ENCODE measurements at regions of chr11 and their contacts with region 1.

Region 1: DNA sequence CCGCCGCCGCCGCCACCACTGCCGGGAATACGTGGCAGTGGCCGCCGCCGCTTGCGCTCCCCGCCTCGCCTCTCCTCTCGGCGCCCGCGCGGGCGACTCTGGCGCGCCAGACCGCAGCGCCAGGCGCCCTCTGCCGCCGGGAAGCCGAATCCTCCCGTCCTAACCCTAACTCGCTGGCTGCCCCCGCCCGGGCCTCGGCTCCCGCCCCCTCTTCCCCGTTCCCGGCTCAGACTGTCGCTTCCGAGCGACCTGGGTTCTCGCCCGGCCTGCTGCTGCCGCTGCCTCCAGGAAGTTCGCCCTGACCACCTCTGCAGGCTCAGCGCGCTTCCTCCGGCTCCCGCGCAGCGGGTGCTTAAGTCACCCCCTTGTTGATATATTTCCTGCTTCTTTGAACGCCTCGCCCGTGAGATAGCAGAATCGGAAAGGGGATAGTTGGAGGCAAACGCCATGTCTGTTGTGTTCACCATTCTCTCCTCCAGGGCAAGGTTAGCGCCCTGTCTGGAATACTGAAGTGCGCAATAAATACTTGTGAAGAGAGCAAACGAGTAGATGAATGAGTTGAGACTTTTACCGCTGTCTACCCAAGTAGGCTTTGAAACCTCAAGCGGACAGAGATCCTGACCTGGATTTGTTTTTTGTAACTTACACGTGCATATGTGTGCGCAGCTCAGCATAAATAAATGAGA is at the start of gene SMCO4:
- DNase-seq: peak; percentile 17 to 82 (median 40)
- ATAC-seq: peak; percentile 83
- H3K4me3 ChIP-seq: peak within 1 kb of the TSS; percentile 48
- H3K4me3 Mint-ChIP-seq: peak within 1 kb of the TSS; percentile 88 to 95 (median 92)
- H3K27ac ChIP-seq: peak within 1 kb of the TSS; percentile 33
- H3K27ac Mint-ChIP-seq: peak within 1 kb of the TSS in 7 of 9 donors; percentile 9 to 87 (median 52)
- H3K4me1 ChIP-seq: no peaks in the 10 kb centered on the region
- H3K4me1 Mint-ChIP-seq: peaks cover 6 to 39% (median 21%) of the 10 kb centered on the region in 7 donors
- H3K27me3 ChIP-seq: no peaks in the 10 kb centered on the region
- H3K27me3 Mint-ChIP-seq: peaks cover 0 to 16% (median 4%) of the 10 kb centered on the region in 5 donors
- total RNA-seq, gene SMCO4: 2.9 to 34.7 (median 5.9) TPM

Region 2: DNA sequence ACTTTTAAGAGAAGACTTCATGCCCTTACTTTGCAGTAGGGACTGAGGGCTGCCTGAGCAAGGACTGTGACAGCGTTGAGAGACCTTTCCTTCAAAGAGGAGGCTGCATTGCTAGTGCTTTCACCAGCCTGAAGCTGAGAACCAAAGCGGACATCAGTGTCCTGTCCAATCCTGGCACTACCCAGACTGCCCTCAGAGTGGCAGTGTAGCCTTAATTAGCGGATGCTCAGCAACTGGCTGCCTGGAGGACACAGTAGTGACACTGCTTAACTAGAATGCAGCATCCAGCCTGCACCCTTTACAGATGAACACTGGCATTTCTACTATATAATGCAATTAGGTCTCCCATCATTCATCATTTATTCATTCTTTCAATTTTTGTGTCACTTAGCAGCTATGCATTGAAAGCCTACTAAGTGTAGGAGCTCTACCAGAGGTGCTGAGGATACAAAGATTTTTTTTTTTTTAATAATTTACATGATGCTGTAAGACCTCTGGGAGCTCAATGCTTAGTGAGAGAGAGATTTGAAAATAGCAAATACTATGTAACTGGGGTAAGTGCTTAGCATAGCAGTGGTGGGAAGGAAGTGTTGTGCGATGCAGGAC is 308.7 kb before region 1 on chr11:
- CTCF ChIA-PET with region 1: interaction called, 3 read pairs
- POLR2A ChIA-PET with region 1: no interaction called
- intact Hi-C with region 1: loop called (anchors 1 kb)
- DNase-seq: peak; percentile 16 to 62 (median 50)
- ATAC-seq: peak; percentile 97
- H3K4me3 ChIP-seq: no peak overlapping the region
- H3K4me3 Mint-ChIP-seq: no peak overlapping the region
- H3K27ac ChIP-seq: no peak overlapping the region
- H3K27ac Mint-ChIP-seq: no peak overlapping the region
- H3K4me1 ChIP-seq: no peaks in the 10 kb centered on the region
- H3K4me1 Mint-ChIP-seq: no peaks in the 10 kb centered on the region
- H3K27me3 ChIP-seq: no peaks in the 10 kb centered on the region
- H3K27me3 Mint-ChIP-seq: peaks cover 27 to 46% (median 40%) of the 10 kb centered on the region in 5 donors

Region 3: GRCh38 chr11:93512073-93512475 is 31.4 kb before region 1 on chr11:
- CTCF ChIA-PET with region 1: no interaction called
- POLR2A ChIA-PET with region 1: no interaction called
- intact Hi-C with region 1: loop called in 1 of 2 experiments (anchors 2 kb)
- DNase-seq: no peak
- ATAC-seq: no peak
- H3K4me3 ChIP-seq: no peak overlapping the region
- H3K4me3 Mint-ChIP-seq: peak overlapping the region in 1 of 10 donors; percentile 55
- H3K27ac ChIP-seq: no peak overlapping the region
- H3K27ac Mint-ChIP-seq: peak overlapping the region in 1 of 9 donors; percentile 83
- H3K4me1 ChIP-seq: no peaks in the 10 kb centered on the region
- H3K4me1 Mint-ChIP-seq: peaks cover 0 to 31% (median 0%) of the 10 kb centered on the region in 7 donors
- H3K27me3 ChIP-seq: no peaks in the 10 kb centered on the region
- H3K27me3 Mint-ChIP-seq: no peaks in the 10 kb centered on the region

Region 4: GRCh38 chr11:93614173-93614722 is 70.8 kb after region 1 on chr11:
- CTCF ChIA-PET with region 1: no interaction called
- POLR2A ChIA-PET with region 1: no interaction called
- intact Hi-C with region 1: loop called in 1 of 2 experiments (anchors 2 kb)
- DNase-seq: peak in 7 of 9 donors; percentile 3 to 56 (median 30)
- ATAC-seq: peak; percentile 55
- H3K4me3 ChIP-seq: no peak overlapping the region
- H3K4me3 Mint-ChIP-seq: no peak overlapping the region
- H3K27ac ChIP-seq: no peak overlapping the region
- H3K27ac Mint-ChIP-seq: peak overlapping the region in 1 of 9 donors; percentile 48
- H3K4me1 ChIP-seq: no peaks in the 10 kb centered on the region
- H3K4me1 Mint-ChIP-seq: peaks cover 0 to 2% (median 0%) of the 10 kb centered on the region in 7 donors
- H3K27me3 ChIP-seq: no peaks in the 10 kb centered on the region
- H3K27me3 Mint-ChIP-seq: peaks cover 0 to 8% (median 6%) of the 10 kb centered on the region in 5 donors

Region 5: GRCh38 chr11:93662177-93662575 is 118.7 kb after region 1 on chr11:
- CTCF ChIA-PET with region 1: no interaction called
- POLR2A ChIA-PET with region 1: no interaction called
- intact Hi-C with region 1: loop called in 1 of 2 experiments (anchors 1 kb)
- DNase-seq: no peak
- ATAC-seq: no peak
- H3K4me3 ChIP-seq: peak overlapping the region; percentile 98
- H3K4me3 Mint-ChIP-seq: peak overlapping the region; percentile 76 to 96 (median 88)
- H3K27ac ChIP-seq: peak overlapping the region; percentile 88
- H3K27ac Mint-ChIP-seq: peak overlapping the region; percentile 60 to 95 (median 90)
- H3K4me1 ChIP-seq: peaks cover 8 to 11% of the 10 kb centered on the region in 2 donors
- H3K4me1 Mint-ChIP-seq: peaks cover 0 to 52% (median 37%) of the 10 kb centered on the region in 7 donors
- H3K27me3 ChIP-seq: no peaks in the 10 kb centered on the region
- H3K27me3 Mint-ChIP-seq: peaks cover 0 to 2% (median 0%) of the 10 kb centered on the region in 5 donors

Region 6: GRCh38 chr11:93784152-93784934 is 240.9 kb after region 1 on chr11 and contains the start of gene MED17:
- CTCF ChIA-PET with region 1: no interaction called
- POLR2A ChIA-PET with region 1: no interaction called
- intact Hi-C with region 1: loop called (anchors 1 to 5 kb)
- DNase-seq: peak; percentile 64 to 87 (median 85)
- ATAC-seq: peak; percentile 97
- H3K4me3 ChIP-seq: peak within 1 kb of the TSS; percentile 77
- H3K4me3 Mint-ChIP-seq: peak within 1 kb of the TSS; percentile 93 to 100 (median 96)
- H3K27ac ChIP-seq: peak within 1 kb of the TSS; percentile 94
- H3K27ac Mint-ChIP-seq: peak within 1 kb of the TSS; percentile 81 to 97 (median 93)
- H3K4me1 ChIP-seq: peaks cover 22 to 37% of the 10 kb centered on the region in 2 donors
- H3K4me1 Mint-ChIP-seq: peaks cover 34 to 58% (median 48%) of the 10 kb centered on the region in 7 donors
- H3K27me3 ChIP-seq: no peaks in the 10 kb centered on the region
- H3K27me3 Mint-ChIP-seq: no peaks in the 10 kb centered on the region
- total RNA-seq, gene MED17: 47.7 to 75.9 (median 65.6) TPM